Posterior vena cava (tissue), 2 donors: ENCODE measurements at regions of chr1 and their contacts with region 1.

Region 1: DNA sequence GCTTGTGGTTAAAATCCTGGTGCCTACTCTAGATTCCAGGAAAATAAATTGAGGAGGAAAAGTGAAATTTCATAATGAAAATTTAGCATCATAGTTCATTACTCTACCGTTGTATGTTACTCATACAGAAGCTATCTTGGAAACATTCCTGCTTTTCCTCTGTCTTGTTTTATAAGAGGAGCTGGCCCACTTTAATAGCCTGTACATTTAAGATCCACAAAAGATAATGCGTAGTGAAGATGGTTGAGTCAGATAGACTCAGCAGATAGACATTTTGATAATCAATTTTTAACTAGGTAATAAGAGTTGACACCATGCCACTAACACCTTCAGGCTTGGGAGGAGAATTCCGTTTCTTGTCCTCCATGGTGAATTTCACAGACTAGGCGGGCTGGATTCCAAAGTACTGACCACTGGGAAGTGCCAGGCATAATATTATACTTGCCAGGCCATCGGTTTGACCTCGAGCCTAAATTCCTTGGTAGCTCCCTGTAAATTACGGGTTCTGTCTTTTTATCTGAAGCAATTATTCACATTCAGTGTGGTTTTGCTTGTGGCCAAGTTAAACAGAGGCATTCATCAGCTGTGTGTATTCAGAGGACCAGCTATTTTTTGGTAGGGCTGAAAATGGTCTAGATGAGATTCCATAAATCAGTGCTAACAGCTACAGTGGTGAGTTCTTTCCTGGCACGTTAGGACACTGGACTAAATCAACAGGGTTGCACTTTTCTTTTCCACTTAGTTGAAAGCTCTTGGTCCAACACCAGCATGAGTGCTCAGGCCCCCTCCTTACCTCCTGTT is 111.9 kb upstream of the KAZN start:
- DNase-seq: no peak

Region 2: DNA sequence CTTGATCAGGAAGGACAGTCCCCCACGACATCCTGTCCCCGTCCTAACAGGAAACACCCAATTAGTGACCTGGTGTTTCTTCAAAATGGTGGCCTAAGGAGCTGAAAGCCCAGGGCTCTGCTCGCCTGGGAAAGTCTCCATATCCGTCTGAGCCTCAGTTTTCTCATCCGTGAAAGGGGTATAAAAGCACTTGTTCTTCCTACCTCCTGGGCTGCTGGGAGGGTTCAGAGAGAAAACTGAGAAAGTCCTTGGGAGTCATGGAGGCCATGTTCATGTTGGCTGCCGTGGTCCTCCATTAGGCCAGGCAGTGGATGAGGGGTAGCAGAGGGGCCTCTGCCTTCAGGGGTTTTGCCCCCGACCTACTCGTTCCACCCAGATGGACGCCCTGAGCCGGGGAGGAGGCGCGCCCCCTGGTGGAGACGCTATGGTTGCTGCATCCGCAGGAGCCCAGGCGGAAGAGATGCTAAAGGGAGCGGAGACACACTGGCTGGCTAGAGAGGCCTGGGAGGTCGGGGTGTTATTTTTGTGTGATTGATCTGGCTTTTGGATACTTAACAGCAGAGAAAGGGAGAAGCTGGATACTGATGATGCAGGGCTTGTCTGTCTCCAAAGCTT is 673.1 kb before region 1 on chr1:
- intact Hi-C with region 1: no loop called
- DNase-seq: no peak

Region 3: GRCh38 chr1:14549897-14550620 is 63.5 kb after region 1 on chr1:
- intact Hi-C with region 1: loop called in 1 of 2 experiments (anchors 5 kb)
- DNase-seq: no peak